Natural killer cell (primary cell): ENCODE measurements at regions of chr14 and their contacts with region 1.

Region 1: DNA sequence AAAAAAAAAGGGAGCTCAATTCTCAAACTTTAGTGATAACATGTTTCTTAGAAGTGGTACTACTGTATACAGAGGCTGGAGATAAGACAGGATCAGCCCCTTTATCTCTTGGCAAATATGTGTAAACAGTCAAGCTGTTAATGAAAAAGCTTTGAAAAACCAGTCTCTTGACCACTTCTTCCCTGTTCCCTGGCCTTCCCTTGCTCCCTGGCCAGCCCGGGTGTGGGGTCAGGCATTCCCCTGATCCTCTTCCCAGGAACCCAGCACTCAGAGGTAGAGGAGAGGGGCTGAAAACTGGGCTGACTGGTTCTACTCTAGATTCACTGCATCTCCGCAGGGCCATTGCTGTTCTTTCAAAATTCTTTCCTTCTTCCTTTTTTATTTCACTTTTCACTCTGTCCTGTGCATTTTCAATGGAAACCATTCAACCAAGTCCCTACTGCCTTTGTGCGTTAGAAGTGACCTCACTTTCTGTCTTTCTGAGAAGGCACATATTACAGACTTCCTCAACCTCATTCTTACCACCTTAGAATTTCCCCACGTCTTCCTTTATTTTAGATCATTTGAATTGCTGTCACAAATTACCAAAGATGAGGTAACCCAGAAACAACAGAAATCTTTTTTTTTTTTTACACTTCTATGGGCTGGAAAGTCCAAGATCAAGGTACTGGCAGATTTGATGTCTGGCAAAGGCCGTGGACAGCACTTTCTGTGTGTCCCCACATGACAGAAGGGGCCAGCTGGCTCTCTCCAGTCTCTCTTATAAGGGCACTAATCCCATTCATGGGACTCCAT is 5.7 kb downstream of the GNG2 start:
- DNase-seq: peak; percentile 54 to 76
- ATAC-seq: peak; percentile 47 to 74 (median 69)
- H3K4me3 ChIP-seq: no peak overlapping the region
- H3K4me3 Mint-ChIP-seq: no peak overlapping the region
- H3K27ac ChIP-seq: peak overlapping the region; percentile 82
- H3K27ac Mint-ChIP-seq: no peak overlapping the region
- H3K4me1 ChIP-seq: peaks cover 50% of the 10 kb centered on the region
- H3K4me1 Mint-ChIP-seq: peaks cover 32 to 36% of the 10 kb centered on the region in 2 donors
- H3K27me3 ChIP-seq: no peaks in the 10 kb centered on the region
- H3K27me3 Mint-ChIP-seq: no peaks in the 10 kb centered on the region
- CTCF ChIP-seq: no peak

Region 2: GRCh38 chr14:51901475-51902024 is 35.4 kb after region 1 on chr14:
- intact Hi-C with region 1: loop called (anchors 2 kb)
- DNase-seq: peak in 1 of 2 donors; percentile 66
- ATAC-seq: peak; percentile 20 to 37 (median 32)
- H3K4me3 ChIP-seq: no peak overlapping the region
- H3K4me3 Mint-ChIP-seq: peak overlapping the region; percentile 53
- H3K27ac ChIP-seq: no peak overlapping the region
- H3K27ac Mint-ChIP-seq: peak overlapping the region; percentile 86 to 94
- H3K4me1 ChIP-seq: peaks cover 22% of the 10 kb centered on the region
- H3K4me1 Mint-ChIP-seq: peaks cover 86 to 91% of the 10 kb centered on the region in 2 donors
- H3K27me3 ChIP-seq: no peaks in the 10 kb centered on the region
- H3K27me3 Mint-ChIP-seq: no peaks in the 10 kb centered on the region
- CTCF ChIP-seq: no peak